ENCODE measurements at regions of chr5 and their contacts with region 1.

Region 1: DNA sequence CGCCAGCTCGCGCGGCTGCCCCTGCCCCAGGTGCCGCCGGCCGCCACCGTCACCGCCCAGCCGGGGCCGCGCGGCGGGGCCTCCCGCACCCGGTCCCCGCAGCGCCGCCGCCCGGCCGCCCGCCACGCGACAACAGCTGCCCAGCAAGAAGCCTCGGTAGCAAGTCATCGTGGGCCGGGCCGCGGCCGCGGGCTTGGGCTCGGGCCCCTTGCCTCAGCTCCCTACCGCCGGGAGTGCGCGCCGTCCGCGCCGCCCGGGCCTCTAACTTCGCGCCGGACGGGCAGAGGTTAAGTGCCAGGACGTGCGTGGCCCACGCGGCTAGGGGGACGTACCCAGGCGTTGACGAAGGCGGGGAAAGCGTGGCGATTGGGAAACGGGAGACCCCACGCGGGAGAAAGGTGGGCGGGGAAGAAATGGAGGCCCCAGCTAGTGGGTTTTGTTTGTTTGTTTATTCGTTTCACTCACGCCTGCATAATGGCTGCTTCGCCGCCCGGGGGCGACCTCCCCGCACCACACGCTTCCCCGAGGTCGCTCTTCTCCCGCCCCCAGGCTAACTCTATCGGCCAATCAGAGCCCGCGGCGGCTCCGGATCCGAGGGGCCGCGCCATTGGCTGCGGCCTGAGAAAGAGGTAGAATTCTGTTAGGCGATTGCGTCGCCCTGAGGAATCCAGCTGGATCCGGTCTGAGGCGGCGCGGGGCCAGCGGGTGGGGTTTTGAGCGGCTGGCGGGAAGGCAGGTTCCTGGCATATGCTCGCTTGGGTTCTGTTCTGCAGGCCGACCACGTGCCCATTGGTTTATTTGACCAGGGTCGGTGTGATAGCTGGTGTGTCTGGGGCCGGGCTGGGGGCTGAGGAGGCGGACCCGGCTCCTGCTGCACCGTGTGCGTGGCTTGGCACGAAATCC is at the start of gene NADK2:
- DNase-seq: peak; percentile 96
- H3K4me3 Mint-ChIP-seq: peak within 1 kb of the TSS; percentile 80
- H3K27ac Mint-ChIP-seq: peak within 1 kb of the TSS; percentile 90
- H3K4me1 Mint-ChIP-seq: peaks cover 42% of the 10 kb centered on the region
- H3K27me3 Mint-ChIP-seq: no peaks in the 10 kb centered on the region
- total RNA-seq, gene NADK2: 19.9 to 20.0 TPM

Region 2: GRCh38 chr5:35617435-35618303 is 624.2 kb before region 1 on chr5 and contains the start of gene SPEF2:
- CTCF ChIA-PET with region 1: no interaction called
- intact Hi-C with region 1: loop called (anchors 5 kb)
- DNase-seq: peak; percentile 86
- H3K4me3 Mint-ChIP-seq: peak within 1 kb of the TSS; percentile 90
- H3K27ac Mint-ChIP-seq: peak within 1 kb of the TSS; percentile 88
- H3K4me1 Mint-ChIP-seq: peaks cover 16% of the 10 kb centered on the region
- H3K27me3 Mint-ChIP-seq: no peaks in the 10 kb centered on the region
- total RNA-seq, gene SPEF2: 6.5 to 6.6 TPM

Region 3: DNA sequence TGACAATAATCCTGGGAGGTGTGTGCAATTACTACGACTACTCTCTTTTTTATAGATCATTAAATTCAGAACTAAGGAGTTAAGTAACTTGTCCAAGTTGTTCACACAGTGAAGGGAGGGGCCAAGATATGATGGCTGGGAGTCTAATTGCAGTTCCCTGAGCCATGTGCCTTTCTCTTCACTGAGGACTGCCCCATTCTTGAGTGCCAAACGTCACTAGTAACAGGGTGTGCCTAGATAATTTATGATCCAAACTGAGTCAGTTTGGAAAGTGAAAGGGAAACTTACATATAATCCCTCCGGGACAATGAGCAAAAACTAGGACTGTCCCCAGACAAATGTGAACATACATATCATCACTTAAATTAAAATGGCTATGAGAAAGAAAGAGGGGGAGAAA is 365.0 kb before region 1 on chr5:
- CTCF ChIA-PET with region 1: no interaction called
- intact Hi-C with region 1: no loop called
- DNase-seq: peak; percentile 43
- H3K4me3 Mint-ChIP-seq: no peak overlapping the region
- H3K27ac Mint-ChIP-seq: peak overlapping the region; percentile 88
- H3K4me1 Mint-ChIP-seq: peaks cover 85% of the 10 kb centered on the region
- H3K27me3 Mint-ChIP-seq: no peaks in the 10 kb centered on the region

Region 4: DNA sequence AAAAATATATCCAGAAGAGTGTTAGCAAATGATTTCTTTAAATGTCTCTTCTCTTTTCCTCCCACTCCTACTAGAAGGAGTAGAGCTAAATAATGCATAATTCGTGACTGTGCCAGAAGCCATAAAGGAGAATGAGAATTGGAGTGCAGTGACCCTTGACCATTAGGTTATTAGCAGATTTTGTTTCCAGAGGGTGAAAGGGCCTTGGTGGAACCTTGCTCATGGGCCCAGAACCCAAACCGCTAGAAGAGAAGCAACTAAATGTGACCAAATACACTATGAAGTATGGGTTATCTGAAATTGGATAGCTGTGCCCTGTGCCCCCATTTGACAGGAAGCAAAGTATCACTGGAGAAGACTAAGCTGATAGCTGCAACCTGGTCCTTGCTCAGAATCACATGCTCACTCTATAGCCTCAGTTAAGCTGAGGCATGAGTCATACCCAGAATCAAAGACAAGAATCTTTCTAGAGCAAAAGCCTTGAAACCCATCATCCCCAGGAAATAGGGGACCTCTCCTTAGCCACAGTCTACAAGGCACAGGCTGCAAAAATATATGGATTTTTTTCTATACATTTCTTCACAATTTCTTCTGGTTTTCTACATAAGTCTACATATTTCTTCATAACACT is 339.7 kb before region 1 on chr5:
- CTCF ChIA-PET with region 1: no interaction called
- intact Hi-C with region 1: loop called (anchors 5 kb)
- DNase-seq: peak; percentile 58
- H3K4me3 Mint-ChIP-seq: no peak overlapping the region
- H3K27ac Mint-ChIP-seq: peak overlapping the region; percentile 34
- H3K4me1 Mint-ChIP-seq: peaks cover 85% of the 10 kb centered on the region
- H3K27me3 Mint-ChIP-seq: no peaks in the 10 kb centered on the region

Region 5: GRCh38 chr5:36305571-36306326 is 63.9 kb after region 1 on chr5:
- CTCF ChIA-PET with region 1: interaction called, 3 read pairs
- intact Hi-C with region 1: loop called (anchors 1 kb)
- DNase-seq: peak; percentile 51
- H3K4me3 Mint-ChIP-seq: no peak overlapping the region
- H3K27ac Mint-ChIP-seq: no peak overlapping the region
- H3K4me1 Mint-ChIP-seq: peaks cover 13% of the 10 kb centered on the region
- H3K27me3 Mint-ChIP-seq: peaks cover 2% of the 10 kb centered on the region

Region 6: DNA sequence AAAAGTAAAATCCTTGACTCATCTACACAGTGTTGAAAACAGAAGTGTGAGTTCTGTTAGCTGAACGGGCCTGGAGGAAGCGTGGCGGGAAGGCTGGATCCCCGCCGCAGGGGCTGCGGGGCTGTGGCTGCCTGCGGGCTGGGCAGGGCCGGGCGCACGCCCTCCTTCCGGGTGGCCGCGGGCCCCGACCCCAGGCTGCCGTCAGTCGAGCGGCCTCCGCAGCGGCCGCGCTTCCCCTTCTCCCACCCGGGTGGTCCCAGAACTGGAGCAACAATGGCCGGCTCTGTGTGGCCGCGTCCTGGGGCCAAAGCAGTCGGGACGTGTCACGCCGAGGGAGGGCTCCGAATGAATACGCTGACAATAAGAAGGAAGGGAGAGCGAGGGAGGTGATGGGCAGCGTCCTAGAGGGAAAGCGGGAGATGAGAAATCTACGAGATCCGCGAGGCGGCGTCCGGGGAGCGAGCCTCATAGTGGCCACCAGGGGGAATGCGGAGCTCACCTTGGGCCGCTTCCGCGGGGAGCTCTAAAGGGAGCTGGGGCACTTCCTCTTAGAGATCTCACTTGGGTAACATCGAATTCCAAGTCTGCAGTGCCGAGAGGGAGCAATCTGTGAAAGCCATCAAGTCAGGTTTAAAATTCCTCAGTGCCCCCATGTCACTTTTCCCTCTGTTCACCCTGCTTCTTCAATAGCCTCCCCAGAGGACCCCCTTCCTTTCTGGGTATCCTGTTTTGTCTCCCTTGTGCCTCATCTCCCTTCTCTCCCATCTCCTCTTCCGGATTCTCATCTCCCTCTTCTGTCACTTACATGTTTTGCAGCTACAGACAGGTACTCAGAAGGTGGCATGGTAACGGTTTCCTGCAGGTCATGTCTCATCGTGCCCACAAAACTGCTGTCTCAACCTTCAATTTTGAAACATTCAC is 448.4 kb after region 1 on chr5:
- CTCF ChIA-PET with region 1: interaction called, 3 read pairs
- intact Hi-C with region 1: loop called (anchors 1 kb)
- DNase-seq: peak; percentile 79
- H3K4me3 Mint-ChIP-seq: peak overlapping the region; percentile 81
- H3K27ac Mint-ChIP-seq: no peak overlapping the region
- H3K4me1 Mint-ChIP-seq: peaks cover 12% of the 10 kb centered on the region
- H3K27me3 Mint-ChIP-seq: peaks cover 37% of the 10 kb centered on the region

Region 7: GRCh38 chr5:37370864-37371726 is 1129.2 kb after region 1 on chr5 and contains the start of gene NUP155:
- CTCF ChIA-PET with region 1: no interaction called
- intact Hi-C with region 1: loop called (anchors 10 kb)
- DNase-seq: peak; percentile 94
- H3K4me3 Mint-ChIP-seq: peak within 1 kb of the TSS; percentile 99
- H3K27ac Mint-ChIP-seq: peak within 1 kb of the TSS; percentile 96
- H3K4me1 Mint-ChIP-seq: peaks cover 37% of the 10 kb centered on the region
- H3K27me3 Mint-ChIP-seq: no peaks in the 10 kb centered on the region
- total RNA-seq, gene NUP155: 79.2 to 87.8 TPM